AG04450 (cell line): ENCODE measurements at regions of chr7 and their contacts with region 1.

Region 1: GRCh38 chr7:47991741-47992311 is 12.4 kb upstream of the HUS1 start:
- DNase-seq: no peak
- H3K4me3 ChIP-seq: peak overlapping the region; percentile 67
- H3K27ac ChIP-seq: no peak overlapping the region
- H3K27me3 ChIP-seq: no peaks in the 10 kb centered on the region
- CTCF ChIP-seq: peak; percentile 77

Region 2: DNA sequence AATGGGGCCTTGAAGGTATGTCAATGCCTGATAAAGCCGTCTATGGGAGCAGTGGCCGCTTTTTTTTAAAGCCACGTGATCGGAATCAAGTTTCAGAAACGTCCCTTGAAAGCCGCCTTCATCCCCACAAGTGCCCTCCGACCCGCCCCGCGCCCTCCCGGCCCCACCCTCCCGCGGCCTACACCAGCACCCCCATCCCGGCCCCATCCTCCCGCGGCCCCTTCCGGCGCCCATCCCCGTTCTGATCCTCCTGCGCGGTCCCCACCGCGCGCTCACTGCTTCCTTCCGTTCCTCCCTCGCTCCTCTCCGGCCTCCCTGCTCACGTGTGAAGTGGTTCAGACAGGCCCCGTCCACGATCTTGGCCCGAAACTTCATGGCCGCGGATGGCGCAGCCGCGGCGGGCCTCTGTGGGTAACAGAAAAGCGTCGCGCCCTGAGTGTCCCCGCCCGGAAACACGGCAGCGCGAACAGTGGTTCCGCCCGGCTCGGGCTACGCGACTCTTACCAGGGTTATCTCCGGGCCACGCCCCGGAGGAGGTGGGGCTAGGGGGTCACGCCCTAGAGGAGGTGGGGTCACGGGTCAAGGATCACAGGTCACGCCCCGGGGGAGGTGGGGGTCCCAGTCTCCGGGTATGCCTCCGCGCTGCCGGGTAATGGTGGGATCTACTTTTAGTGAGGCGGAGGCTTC is 12.5 kb before region 1 on chr7 and contains the start of gene HUS1:
- CTCF ChIA-PET with region 1: interaction called, 12 read pairs
- POLR2A ChIA-PET with region 1: no interaction called
- DNase-seq: peak; percentile 59
- H3K4me3 ChIP-seq: peak within 1 kb of the TSS; percentile 85
- H3K27ac ChIP-seq: peak within 1 kb of the TSS; percentile 81
- H3K27me3 ChIP-seq: no peaks in the 10 kb centered on the region
- CTCF ChIP-seq: no peak
- polyA plus RNA-seq, gene HUS1: 20.0 and 27.9 TPM in 2 replicates

Region 3: DNA sequence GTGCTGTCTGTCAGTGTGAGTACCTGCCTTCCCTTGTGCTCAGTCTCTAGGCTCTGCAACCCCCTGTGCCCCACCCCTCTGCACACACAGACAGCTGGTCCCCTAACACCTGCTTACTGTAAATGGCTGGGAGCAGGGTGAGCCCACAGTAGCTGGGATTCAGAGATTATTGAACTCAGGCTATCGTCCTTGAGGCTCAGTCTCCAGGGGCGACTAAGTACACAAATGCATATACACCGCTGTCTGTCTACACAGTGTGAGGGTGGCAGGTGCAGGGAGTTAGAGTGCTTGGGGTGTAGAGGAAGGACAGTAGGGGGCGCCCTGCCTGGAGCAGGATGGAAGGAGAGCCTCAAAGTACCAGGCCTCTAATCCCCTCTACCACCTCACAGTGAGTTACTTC is 110.1 kb after region 1 on chr7:
- CTCF ChIA-PET with region 1: interaction called, 160 read pairs
- POLR2A ChIA-PET with region 1: no interaction called
- DNase-seq: no peak
- H3K4me3 ChIP-seq: no peak overlapping the region
- H3K27ac ChIP-seq: no peak overlapping the region
- H3K27me3 ChIP-seq: no peaks in the 10 kb centered on the region
- CTCF ChIP-seq: peak; percentile 31

Region 4: DNA sequence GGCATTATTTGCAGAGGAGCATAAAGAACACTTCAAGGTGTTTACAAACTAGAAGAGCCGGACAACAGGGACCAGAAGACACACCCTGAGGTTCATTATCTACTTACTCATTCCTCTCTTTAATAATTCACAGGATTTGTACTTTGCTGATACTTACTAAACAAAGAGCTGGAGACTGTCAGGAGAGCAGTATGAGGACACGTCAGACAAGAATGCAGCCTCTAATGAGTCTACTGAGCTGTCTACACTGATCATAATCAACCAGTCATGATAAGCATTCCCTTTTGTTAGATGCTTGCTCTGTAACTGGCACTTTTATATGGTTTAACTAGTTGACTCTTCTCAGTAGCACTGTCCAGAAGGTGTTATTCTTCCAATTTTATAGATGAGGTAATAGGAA is 689.2 kb after region 1 on chr7:
- CTCF ChIA-PET with region 1: no interaction called
- POLR2A ChIA-PET with region 1: no interaction called
- DNase-seq: no peak
- H3K4me3 ChIP-seq: no peak overlapping the region
- H3K27ac ChIP-seq: no peak overlapping the region
- H3K27me3 ChIP-seq: no peaks in the 10 kb centered on the region
- CTCF ChIP-seq: no peak